Panc1 (cell line): ENCODE measurements at regions of chr4 and their contacts with region 1.

Region 1: GRCh38 chr4:3442959-3443749 is 1.4 kb downstream of the HGFAC start:
- DNase-seq: no peak
- ATAC-seq: peak; percentile 80
- H3K4me3 ChIP-seq: no peak overlapping the region
- H3K27ac ChIP-seq: no peak overlapping the region
- H3K4me1 ChIP-seq: no peaks in the 10 kb centered on the region; the same call in 1 of the 2 replicates
- H3K27me3 ChIP-seq: no peaks in the 10 kb centered on the region
- CTCF ChIP-seq: peak; percentile 95

Region 2: GRCh38 chr4:3207531-3208037 is 235.6 kb before region 1 on chr4:
- CTCF ChIA-PET with region 1: no interaction called
- POLR2A ChIA-PET with region 1: no interaction called
- in situ Hi-C with region 1: no loop called
- intact Hi-C with region 1: loop called (anchors 5 kb)
- DNase-seq: no peak
- ATAC-seq: no peak
- H3K4me3 ChIP-seq: no peak overlapping the region
- H3K27ac ChIP-seq: no peak overlapping the region
- H3K4me1 ChIP-seq: no peaks in the 10 kb centered on the region
- H3K27me3 ChIP-seq: no peaks in the 10 kb centered on the region
- CTCF ChIP-seq: no peak

Region 3: GRCh38 chr4:3346146-3346545 is 97.0 kb before region 1 on chr4:
- CTCF ChIA-PET with region 1: no interaction called
- POLR2A ChIA-PET with region 1: no interaction called
- in situ Hi-C with region 1: no loop called
- intact Hi-C with region 1: loop called (anchors 5 kb)
- DNase-seq: peak; percentile 41
- ATAC-seq: peak; percentile 94
- H3K4me3 ChIP-seq: no peak overlapping the region
- H3K27ac ChIP-seq: no peak overlapping the region
- H3K4me1 ChIP-seq: no peaks in the 10 kb centered on the region
- H3K27me3 ChIP-seq: no peaks in the 10 kb centered on the region
- CTCF ChIP-seq: peak; percentile 81